Endothelial cell of umbilical vein (primary cell): ENCODE measurements at regions of chr14 and their contacts with region 1.

Region 1: DNA sequence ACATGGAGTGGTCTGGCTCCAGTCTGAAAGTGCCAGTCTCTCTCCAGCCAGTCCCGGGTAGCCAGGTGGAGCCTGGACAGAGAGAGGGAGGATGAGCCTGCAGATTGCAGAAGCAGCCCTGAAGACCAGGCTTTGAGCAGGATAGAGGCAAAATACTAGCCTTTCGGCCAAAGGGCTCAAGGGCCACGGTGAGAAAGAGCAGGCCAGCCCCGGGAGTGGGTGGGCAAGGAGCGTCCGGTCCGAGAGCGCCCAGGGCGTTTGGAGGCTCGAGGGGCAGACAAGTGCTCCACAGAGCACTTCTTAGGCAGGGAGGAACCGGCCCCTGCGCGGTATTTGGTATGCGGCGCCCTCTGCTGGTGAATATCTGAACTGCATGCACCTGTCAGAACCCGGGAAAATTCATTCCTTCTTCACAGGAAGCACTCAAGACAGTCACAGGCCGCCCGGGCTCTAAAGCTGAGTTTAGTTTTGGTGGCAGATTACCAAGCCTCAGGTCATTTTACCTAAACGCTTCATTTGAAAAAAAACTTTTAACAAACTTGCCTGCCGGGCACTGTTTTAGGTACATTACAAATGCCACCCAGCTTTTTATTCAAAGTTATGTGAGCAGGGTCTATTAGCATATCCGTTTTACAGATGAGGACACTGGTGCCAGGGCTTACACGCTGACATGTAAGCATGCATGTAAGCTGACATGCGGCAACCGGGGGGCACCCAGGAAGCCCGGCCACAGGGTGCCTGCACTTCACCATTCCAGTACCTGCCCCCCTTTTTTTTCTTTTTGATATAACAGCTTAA is 21.0 kb upstream of the PSMC1 start:
- DNase-seq: peak; percentile 80
- H3K4me3 ChIP-seq: no peak overlapping the region
- H3K27ac ChIP-seq: no peak overlapping the region
- H3K4me1 ChIP-seq: no peaks in the 10 kb centered on the region
- H3K27me3 ChIP-seq: peaks cover 3 to 4% of the 10 kb centered on the region in 2 experiments
- CTCF ChIP-seq: peak; percentile 84 to 89
- POLR2A ChIP-seq: no peak

Region 2: GRCh38 chr14:89826596-89826995 is 408.8 kb before region 1 on chr14:
- CTCF ChIA-PET with region 1: no interaction called
- POLR2A ChIA-PET with region 1: no interaction called
- dilution Hi-C with region 1: no loop called
- intact Hi-C with region 1: no loop called
- DNase-seq: no peak
- H3K4me3 ChIP-seq: no peak overlapping the region
- H3K27ac ChIP-seq: no peak overlapping the region
- H3K4me1 ChIP-seq: no peaks in the 10 kb centered on the region
- H3K27me3 ChIP-seq: no peaks in the 10 kb centered on the region
- CTCF ChIP-seq: no peak
- POLR2A ChIP-seq: no peak

Region 3: DNA sequence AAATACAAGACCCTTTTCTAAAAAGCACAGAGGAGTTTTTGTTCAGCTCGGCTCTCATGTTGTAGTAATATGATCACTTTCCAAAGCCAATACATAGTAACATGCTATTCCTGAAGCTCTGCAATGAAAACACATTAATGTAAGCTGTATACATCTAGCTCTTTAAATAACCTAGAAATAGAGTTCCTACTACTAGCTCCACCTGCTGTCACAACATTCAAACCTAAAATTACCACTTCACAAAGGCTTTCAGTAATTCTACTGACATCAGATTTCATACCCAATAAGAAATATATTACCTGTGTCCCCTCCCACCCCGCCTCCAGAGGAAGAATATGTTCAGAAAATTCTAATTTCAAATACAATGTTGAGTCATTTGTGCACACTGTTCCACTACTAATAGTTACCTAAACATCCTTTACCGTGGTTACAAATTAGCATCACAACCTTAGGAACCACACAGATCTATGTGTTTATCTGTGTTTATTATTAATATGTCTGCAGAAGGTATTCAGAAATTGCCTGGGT is 298.7 kb before region 1 on chr14:
- CTCF ChIA-PET with region 1: interaction called, 61 read pairs
- POLR2A ChIA-PET with region 1: no interaction called
- dilution Hi-C with region 1: no loop called
- intact Hi-C with region 1: loop called (anchors 1 kb)
- DNase-seq: no peak
- H3K4me3 ChIP-seq: no peak overlapping the region
- H3K27ac ChIP-seq: no peak overlapping the region
- H3K4me1 ChIP-seq: peaks cover under 1% of the 10 kb centered on the region
- H3K27me3 ChIP-seq: no peaks in the 10 kb centered on the region
- CTCF ChIP-seq: no peak
- POLR2A ChIP-seq: no peak

Region 4: GRCh38 chr14:89983375-89983774 is 252.0 kb before region 1 on chr14:
- CTCF ChIA-PET with region 1: interaction called, 294 read pairs
- POLR2A ChIA-PET with region 1: no interaction called
- dilution Hi-C with region 1: no loop called
- intact Hi-C with region 1: no loop called
- DNase-seq: no peak
- H3K4me3 ChIP-seq: no peak overlapping the region
- H3K27ac ChIP-seq: no peak overlapping the region
- H3K4me1 ChIP-seq: no peaks in the 10 kb centered on the region
- H3K27me3 ChIP-seq: no peaks in the 10 kb centered on the region
- CTCF ChIP-seq: no peak
- POLR2A ChIP-seq: no peak

Region 5: DNA sequence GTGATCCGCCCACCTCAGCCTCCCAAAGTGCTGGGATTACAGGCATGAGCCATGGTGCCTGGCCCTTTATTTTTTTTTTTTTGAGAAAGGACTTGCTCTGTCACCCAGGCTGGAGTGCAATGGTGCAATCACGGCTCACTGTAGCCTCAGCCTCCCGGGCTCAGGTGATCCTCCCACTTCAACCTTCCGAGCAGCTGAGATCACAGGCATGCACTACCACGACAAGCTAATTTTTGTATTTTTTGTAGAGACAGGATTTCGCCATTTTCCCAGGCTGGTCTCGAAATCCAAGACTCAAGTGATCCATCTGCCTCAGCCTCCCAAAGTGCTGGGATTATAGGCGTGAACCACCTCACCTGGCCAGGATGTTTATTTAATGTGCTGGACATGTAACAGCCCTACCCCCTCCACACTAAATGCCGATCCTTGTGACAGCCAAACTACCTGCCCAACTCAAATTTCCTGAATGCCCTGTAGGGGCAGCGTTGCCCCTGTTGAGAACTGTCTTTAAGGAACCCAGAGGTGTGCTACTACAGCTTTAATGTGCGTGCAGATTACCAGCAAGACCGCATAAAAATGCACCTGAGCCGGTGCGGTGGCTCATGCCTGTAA is 125.6 kb before region 1 on chr14:
- CTCF ChIA-PET with region 1: interaction called, 17 read pairs
- POLR2A ChIA-PET with region 1: no interaction called
- dilution Hi-C with region 1: no loop called
- intact Hi-C with region 1: loop called (anchors 1 kb)
- DNase-seq: no peak
- H3K4me3 ChIP-seq: no peak overlapping the region
- H3K27ac ChIP-seq: no peak overlapping the region
- H3K4me1 ChIP-seq: no peaks in the 10 kb centered on the region
- H3K27me3 ChIP-seq: peaks cover 0 to 2% of the 10 kb centered on the region in 2 experiments
- CTCF ChIP-seq: peak in 1 of 2 donors; percentile 21
- POLR2A ChIP-seq: no peak

Region 6: GRCh38 chr14:90140298-90140955 is 95.0 kb before region 1 on chr14:
- CTCF ChIA-PET with region 1: interaction called, 5 read pairs
- POLR2A ChIA-PET with region 1: no interaction called
- dilution Hi-C with region 1: no loop called
- intact Hi-C with region 1: loop called (anchors 1 kb)
- DNase-seq: peak; percentile 62
- H3K4me3 ChIP-seq: no peak overlapping the region
- H3K27ac ChIP-seq: peak overlapping the region; percentile 93
- H3K4me1 ChIP-seq: peaks cover 34% of the 10 kb centered on the region
- H3K27me3 ChIP-seq: peaks cover 2 to 5% of the 10 kb centered on the region in 2 experiments
- CTCF ChIP-seq: no peak
- POLR2A ChIP-seq: no peak

Region 7: GRCh38 chr14:90288651-90289355 is 53.4 kb after region 1 on chr14:
- CTCF ChIA-PET with region 1: no interaction called
- POLR2A ChIA-PET with region 1: no interaction called
- dilution Hi-C with region 1: no loop called
- intact Hi-C with region 1: no loop called
- DNase-seq: peak; percentile 68
- H3K4me3 ChIP-seq: no peak overlapping the region
- H3K27ac ChIP-seq: no peak overlapping the region
- H3K4me1 ChIP-seq: peaks cover 5% of the 10 kb centered on the region
- H3K27me3 ChIP-seq: no peaks in the 10 kb centered on the region
- CTCF ChIP-seq: no peak
- POLR2A ChIP-seq: no peak